ENCODE measurements at regions of chr21 and their contacts with region 1.

Region 1: GRCh38 chr21:38126669-38127303 is 130.0 kb upstream of the KCNJ15 start:
- DNase-seq: peak; percentile 53
- H3K4me3 ChIP-seq: no peak overlapping the region
- H3K27ac ChIP-seq: no peak overlapping the region
- H3K4me1 ChIP-seq: no peaks in the 10 kb centered on the region
- H3K27me3 ChIP-seq: no peaks in the 10 kb centered on the region
- CTCF ChIP-seq: peak; percentile 89 to 94

Region 2: GRCh38 chr21:37700641-37701202 is 426.1 kb before region 1 on chr21:
- CTCF ChIA-PET with region 1: interaction called, 7 read pairs
- dilution Hi-C with region 1: no loop called
- in situ Hi-C with region 1: loop called (anchors 10 to 25 kb)
- intact Hi-C with region 1: loop called (anchors 1 kb)
- DNase-seq: peak; percentile 73
- H3K4me3 ChIP-seq: no peak overlapping the region
- H3K27ac ChIP-seq: no peak overlapping the region
- H3K4me1 ChIP-seq: no peaks in the 10 kb centered on the region
- H3K27me3 ChIP-seq: no peaks in the 10 kb centered on the region
- CTCF ChIP-seq: peak; percentile 68 to 74

Region 3: DNA sequence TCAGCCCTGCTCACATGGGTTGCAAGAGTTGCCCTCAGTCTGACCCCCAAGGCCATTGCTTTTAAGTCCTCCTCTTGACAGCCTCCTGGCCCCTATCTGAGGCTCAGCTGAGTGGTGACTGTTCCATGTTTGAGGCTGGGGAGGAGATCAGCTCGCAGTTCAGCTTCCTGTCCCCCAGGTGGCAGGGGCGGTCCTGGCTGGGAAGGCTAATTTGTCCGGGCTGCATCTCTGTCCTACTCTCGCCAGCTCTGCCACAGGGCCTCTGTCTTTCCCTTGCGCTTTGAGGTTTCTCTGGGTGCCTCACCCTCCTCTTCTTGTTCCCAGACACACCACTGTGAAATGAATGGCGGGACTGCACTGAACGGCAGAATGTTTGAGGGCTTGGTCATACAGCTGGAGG is 367.8 kb before region 1 on chr21:
- CTCF ChIA-PET with region 1: interaction called, 3 read pairs
- dilution Hi-C with region 1: no loop called
- in situ Hi-C with region 1: no loop called
- intact Hi-C with region 1: loop called (anchors 1 kb)
- DNase-seq: peak; percentile 37
- H3K4me3 ChIP-seq: no peak overlapping the region
- H3K27ac ChIP-seq: no peak overlapping the region
- H3K4me1 ChIP-seq: no peaks in the 10 kb centered on the region
- H3K27me3 ChIP-seq: peaks cover 3% of the 10 kb centered on the region
- CTCF ChIP-seq: peak; percentile 40 to 72

Region 4: DNA sequence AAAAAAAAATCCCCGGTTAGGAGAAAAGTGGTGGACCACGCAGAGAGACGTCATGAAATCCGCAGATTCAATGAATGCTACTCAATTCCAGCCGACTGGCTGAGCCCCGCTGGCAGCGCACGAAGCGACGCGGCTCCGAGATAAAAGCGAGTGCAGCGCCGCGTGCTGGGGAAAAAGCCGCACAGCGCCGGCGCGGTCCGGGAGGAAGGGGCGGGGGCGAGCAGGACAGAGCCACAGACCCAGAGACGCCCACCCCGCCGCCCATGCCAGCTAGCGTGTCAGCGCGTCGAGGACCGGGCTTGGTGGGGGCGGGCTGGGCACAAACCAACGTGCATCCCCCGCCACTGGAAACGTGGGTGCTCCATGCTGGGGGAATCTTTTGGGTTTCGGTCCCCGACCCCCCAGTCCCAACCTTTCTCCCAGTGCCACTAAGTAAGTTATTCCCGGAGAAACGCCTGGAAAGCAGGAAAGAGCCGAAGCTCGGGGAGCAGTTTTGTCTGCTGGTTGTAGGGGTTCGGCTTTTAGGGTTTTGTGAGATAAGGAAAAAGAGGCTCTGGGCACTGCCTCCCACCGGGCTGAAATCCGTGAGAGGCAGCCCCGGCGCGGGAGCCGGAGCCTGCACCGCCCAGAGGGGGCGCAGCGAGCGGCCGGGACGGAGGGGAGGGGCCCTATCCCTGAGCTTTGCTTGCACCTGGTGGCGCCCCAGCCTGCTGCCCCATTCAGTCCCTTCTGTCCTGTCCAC is 210.3 kb before region 1 on chr21 and contains the start of gene KCNJ6:
- CTCF ChIA-PET with region 1: no interaction called
- dilution Hi-C with region 1: no loop called
- in situ Hi-C with region 1: no loop called
- intact Hi-C with region 1: loop called (anchors 1 kb)
- DNase-seq: peak; percentile 37
- H3K4me3 ChIP-seq: no peak within 1 kb of the TSS
- H3K27ac ChIP-seq: no peak within 1 kb of the TSS
- H3K4me1 ChIP-seq: no peaks in the 10 kb centered on the region
- H3K27me3 ChIP-seq: peaks cover 20% of the 10 kb centered on the region
- CTCF ChIP-seq: peak in 1 of 2 donors; percentile 47
- total RNA-seq, gene KCNJ6: not detected

Region 5: GRCh38 chr21:38042246-38042645 is 84.5 kb before region 1 on chr21:
- CTCF ChIA-PET with region 1: no interaction called
- dilution Hi-C with region 1: loop called (anchors 5 kb)
- in situ Hi-C with region 1: no loop called
- intact Hi-C with region 1: no loop called
- DNase-seq: peak; percentile 23
- H3K4me3 ChIP-seq: no peak overlapping the region
- H3K27ac ChIP-seq: no peak overlapping the region
- H3K4me1 ChIP-seq: no peaks in the 10 kb centered on the region
- H3K27me3 ChIP-seq: no peaks in the 10 kb centered on the region
- CTCF ChIP-seq: no peak

Measured in mammary epithelial cell (primary cell).